ENCODE measurements at regions of chr6 and their contacts with region 1.

Region 1: GRCh38 chr6:26595669-26596269 is 984 bp upstream of the ABT1 start:
- DNase-seq: peak; percentile 93
- H3K4me3 ChIP-seq: peak overlapping the region; percentile 77 to 93
- H3K27ac ChIP-seq: peak overlapping the region; percentile 84 to 86
- H3K4me1 ChIP-seq: peaks cover 7% of the 10 kb centered on the region
- H3K27me3 ChIP-seq: no peaks in the 10 kb centered on the region
- CTCF ChIP-seq: peak; percentile 89 to 94 (median 92)
- POLR2A ChIP-seq: no peak

Region 2: GRCh38 chr6:26342106-26343004 is 253.4 kb before region 1 on chr6:
- intact Hi-C with region 1: loop called (anchors 2 kb)
- DNase-seq: no peak
- H3K4me3 ChIP-seq: no peak overlapping the region
- H3K27ac ChIP-seq: no peak overlapping the region
- H3K4me1 ChIP-seq: no peaks in the 10 kb centered on the region
- H3K27me3 ChIP-seq: no peaks in the 10 kb centered on the region
- CTCF ChIP-seq: no peak
- POLR2A ChIP-seq: no peak

Region 3: DNA sequence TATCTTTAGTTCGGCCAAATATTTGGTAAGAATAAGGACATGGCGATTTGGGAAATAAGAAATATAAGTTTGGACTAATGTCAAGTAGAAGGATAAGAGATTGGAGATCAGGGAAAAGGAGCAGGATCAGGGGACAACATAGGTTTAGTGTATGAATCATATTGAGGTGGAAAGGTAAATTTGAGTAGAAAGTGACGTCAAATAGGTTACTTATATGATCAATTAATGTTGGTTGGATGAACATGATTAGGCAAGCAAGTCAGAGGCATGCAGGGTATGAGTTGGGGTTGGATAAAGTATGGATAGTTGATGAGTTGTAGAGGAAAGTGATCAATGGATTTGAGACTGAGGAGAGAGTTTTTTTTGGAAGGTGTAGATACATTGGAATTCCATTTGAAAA is 66.9 kb after region 1 on chr6:
- intact Hi-C with region 1: no loop called
- DNase-seq: no peak
- H3K4me3 ChIP-seq: no peak overlapping the region
- H3K27ac ChIP-seq: no peak overlapping the region
- H3K4me1 ChIP-seq: no peaks in the 10 kb centered on the region
- H3K27me3 ChIP-seq: no peaks in the 10 kb centered on the region
- CTCF ChIP-seq: no peak
- POLR2A ChIP-seq: no peak

Region 4: GRCh38 chr6:28203201-28203600 is 1607.4 kb after region 1 on chr6:
- intact Hi-C with region 1: no loop called
- DNase-seq: no peak
- H3K4me3 ChIP-seq: no peak overlapping the region
- H3K27ac ChIP-seq: no peak overlapping the region
- H3K4me1 ChIP-seq: no peaks in the 10 kb centered on the region
- H3K27me3 ChIP-seq: peaks cover 19% of the 10 kb centered on the region
- CTCF ChIP-seq: no peak
- POLR2A ChIP-seq: no peak

Measured in prostate gland (tissue), 2 donors.